ENCODE measurements at regions of chr17 and their contacts with region 1.

Region 1: DNA sequence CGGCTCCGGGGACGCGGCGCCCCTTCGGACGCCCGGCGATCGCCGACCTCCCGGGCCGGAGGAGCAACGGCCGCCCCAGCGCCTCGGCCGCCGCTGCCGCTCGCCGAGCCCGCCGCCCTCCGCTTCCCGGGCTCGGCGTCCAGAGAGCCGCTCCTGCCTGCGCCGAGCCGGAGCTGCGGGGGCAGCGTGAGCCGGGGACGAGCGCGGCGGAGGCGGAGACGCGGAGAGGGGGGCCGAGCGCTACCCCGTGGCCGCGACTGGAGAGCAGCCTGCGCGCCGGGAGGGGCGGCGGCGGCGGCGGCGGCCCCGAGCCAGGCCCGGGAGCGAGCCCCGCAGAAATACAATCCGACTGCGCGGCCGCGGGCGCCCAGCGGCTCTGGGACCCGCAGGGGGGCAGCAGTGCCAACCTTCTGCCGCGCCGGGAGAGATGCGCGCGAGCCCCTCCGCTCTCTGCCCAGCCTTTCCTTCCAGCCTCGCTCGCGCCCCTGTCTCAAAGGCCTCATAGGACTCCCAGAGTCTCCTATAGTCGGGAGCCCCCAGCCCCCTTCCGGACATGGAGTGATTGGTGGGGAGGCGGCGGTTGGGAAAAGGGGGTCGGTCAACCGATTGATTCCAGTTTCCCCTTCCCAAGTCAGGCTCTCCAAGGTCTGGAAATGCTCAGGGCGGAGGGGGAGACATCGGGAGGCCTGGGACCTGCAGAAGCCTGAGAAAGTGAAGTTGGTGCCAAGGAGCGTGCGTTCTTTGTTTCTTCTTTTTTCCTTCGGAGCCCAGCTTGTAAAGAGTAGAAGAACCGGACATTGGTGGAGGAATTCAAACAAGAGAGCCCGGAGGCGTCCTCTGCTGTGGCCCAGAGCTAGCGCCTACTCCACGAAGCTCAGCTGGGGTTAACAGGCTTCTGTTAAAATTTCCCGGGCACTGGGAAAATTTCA is 1.1 kb upstream of the SDK2 start:
- DNase-seq: peak; percentile 62
- ATAC-seq: peak; percentile 64
- H3K4me3 Mint-ChIP-seq: peak overlapping the region; percentile 75
- H3K27ac Mint-ChIP-seq: no peak overlapping the region
- H3K4me1 Mint-ChIP-seq: peaks cover 27% of the 10 kb centered on the region
- H3K27me3 Mint-ChIP-seq: peaks cover 4% of the 10 kb centered on the region
- CTCF ChIP-seq: no peak

Region 2: DNA sequence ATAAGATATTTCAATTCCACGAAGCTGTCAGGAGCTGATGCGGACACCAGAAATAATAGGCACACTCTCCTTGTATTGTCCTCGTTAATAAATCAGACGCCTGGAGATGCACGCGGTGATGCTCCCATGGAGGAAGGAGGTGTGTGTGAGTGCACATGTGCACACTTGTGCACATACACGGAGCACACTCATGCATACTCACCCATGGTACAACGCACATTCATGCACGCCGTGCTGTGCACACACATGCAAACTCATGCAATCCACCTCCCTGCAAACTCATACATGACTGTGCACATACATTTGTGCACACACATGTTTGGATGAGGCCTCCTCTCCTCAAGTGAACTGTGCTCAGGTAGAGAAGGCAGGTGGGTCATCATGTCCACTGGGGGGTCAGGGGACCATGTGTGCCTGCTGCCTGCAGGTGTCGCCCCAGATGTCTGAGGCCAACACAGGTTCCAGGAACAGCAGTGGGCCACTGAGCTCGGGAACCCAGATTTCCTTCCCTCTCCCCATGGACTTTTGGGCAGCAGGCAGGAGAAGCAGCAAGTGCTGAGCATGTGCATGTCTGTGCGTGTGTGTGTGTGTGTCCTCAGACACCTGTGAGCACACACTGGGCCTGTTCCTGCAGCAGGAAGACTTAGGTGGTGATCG is 166.4 kb before region 1 on chr17:
- CTCF ChIA-PET with region 1: no interaction called
- POLR2A ChIA-PET with region 1: no interaction called
- intact Hi-C with region 1: loop called (anchors 5 kb)
- DNase-seq: no peak
- ATAC-seq: no peak
- H3K4me3 Mint-ChIP-seq: no peak overlapping the region
- H3K27ac Mint-ChIP-seq: no peak overlapping the region
- H3K4me1 Mint-ChIP-seq: peaks cover 19% of the 10 kb centered on the region
- H3K27me3 Mint-ChIP-seq: peaks cover 2% of the 10 kb centered on the region
- CTCF ChIP-seq: no peak

Region 3: GRCh38 chr17:73566905-73567782 is 78.2 kb before region 1 on chr17:
- CTCF ChIA-PET with region 1: interaction called, 6 read pairs
- POLR2A ChIA-PET with region 1: interaction called, 8 read pairs
- intact Hi-C with region 1: loop called (anchors 1 kb)
- DNase-seq: peak; percentile 51
- ATAC-seq: peak; percentile 89
- H3K4me3 Mint-ChIP-seq: peak overlapping the region; percentile 46
- H3K27ac Mint-ChIP-seq: peak overlapping the region; percentile 92
- H3K4me1 Mint-ChIP-seq: peaks cover 30% of the 10 kb centered on the region
- H3K27me3 Mint-ChIP-seq: no peaks in the 10 kb centered on the region
- CTCF ChIP-seq: no peak

Region 4: DNA sequence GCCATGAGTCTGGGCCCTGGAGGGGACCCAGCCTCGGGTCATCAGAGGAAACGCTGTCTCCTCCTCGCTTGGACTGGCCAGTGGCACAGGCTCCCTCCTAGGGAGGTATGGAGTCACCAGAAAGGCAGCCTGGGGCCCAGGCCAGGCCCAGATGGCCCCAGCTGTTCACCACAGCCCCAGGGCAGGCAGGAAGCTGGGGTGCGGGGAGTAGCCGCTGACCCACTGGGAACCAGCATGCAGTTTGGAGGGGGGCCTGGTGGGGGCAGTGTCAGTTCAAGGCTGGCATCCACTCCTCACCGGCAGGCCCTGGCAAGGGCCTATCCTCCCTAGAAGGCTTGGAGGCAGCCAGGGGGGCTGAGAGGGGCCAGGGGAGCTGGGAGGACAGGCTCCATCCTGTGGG is 49.8 kb before region 1 on chr17:
- CTCF ChIA-PET with region 1: interaction called, 5 read pairs
- POLR2A ChIA-PET with region 1: interaction called, 10 read pairs
- intact Hi-C with region 1: loop called (anchors 2 kb)
- DNase-seq: peak; percentile 35
- ATAC-seq: no peak
- H3K4me3 Mint-ChIP-seq: no peak overlapping the region
- H3K27ac Mint-ChIP-seq: peak overlapping the region; percentile 90
- H3K4me1 Mint-ChIP-seq: peaks cover 84% of the 10 kb centered on the region
- H3K27me3 Mint-ChIP-seq: no peaks in the 10 kb centered on the region
- CTCF ChIP-seq: no peak

Region 5: GRCh38 chr17:73657473-73658116 is 12.3 kb after region 1 on chr17:
- CTCF ChIA-PET with region 1: no interaction called
- POLR2A ChIA-PET with region 1: no interaction called
- intact Hi-C with region 1: no loop called
- DNase-seq: no peak
- ATAC-seq: no peak
- H3K4me3 Mint-ChIP-seq: no peak overlapping the region
- H3K27ac Mint-ChIP-seq: no peak overlapping the region
- H3K4me1 Mint-ChIP-seq: peaks cover 5% of the 10 kb centered on the region
- H3K27me3 Mint-ChIP-seq: peaks cover 16% of the 10 kb centered on the region
- CTCF ChIP-seq: no peak

Region 6: GRCh38 chr17:73820686-73821448 is 175.6 kb after region 1 on chr17:
- CTCF ChIA-PET with region 1: no interaction called
- POLR2A ChIA-PET with region 1: no interaction called
- intact Hi-C with region 1: no loop called
- DNase-seq: no peak
- ATAC-seq: no peak
- H3K4me3 Mint-ChIP-seq: no peak overlapping the region
- H3K27ac Mint-ChIP-seq: no peak overlapping the region
- H3K4me1 Mint-ChIP-seq: no peaks in the 10 kb centered on the region
- H3K27me3 Mint-ChIP-seq: peaks cover 11% of the 10 kb centered on the region
- CTCF ChIP-seq: no peak

Region 7: GRCh38 chr17:73956669-73957465 is 311.6 kb after region 1 on chr17:
- CTCF ChIA-PET with region 1: no interaction called
- POLR2A ChIA-PET with region 1: no interaction called
- intact Hi-C with region 1: loop called (anchors 10 kb)
- DNase-seq: peak; percentile 26
- ATAC-seq: no peak
- H3K4me3 Mint-ChIP-seq: no peak overlapping the region
- H3K27ac Mint-ChIP-seq: no peak overlapping the region
- H3K4me1 Mint-ChIP-seq: peaks cover 3% of the 10 kb centered on the region
- H3K27me3 Mint-ChIP-seq: peaks cover 6% of the 10 kb centered on the region
- CTCF ChIP-seq: no peak

Measured in activated B cell treated with CpG ODN at 0.5 μM for 24 hours (primary cell).